ENCODE measurements at regions of chr1 and their contacts with region 1.

Region 1: GRCh38 chr1:119948342-119949214 is 52.3 kb upstream of the ADAM30 start:
- DNase-seq: peak; percentile 51
- H3K4me3 ChIP-seq: no peak overlapping the region; a peak in 1 of 4 replicates
- H3K27ac ChIP-seq: peak overlapping the region in 1 of 2 experiments; percentile 89; a peak in 2 of 4 replicates
- H3K4me1 ChIP-seq: peaks cover 0 to 20% of the 10 kb centered on the region in 2 experiments; a peak in 2 of 4 replicates
- H3K27me3 ChIP-seq: no peaks in the 10 kb centered on the region
- CTCF ChIP-seq: peak; percentile 92
- EP300 ChIP-seq: no peak
- RAD21 ChIP-seq: peak; percentile 96

Region 2: DNA sequence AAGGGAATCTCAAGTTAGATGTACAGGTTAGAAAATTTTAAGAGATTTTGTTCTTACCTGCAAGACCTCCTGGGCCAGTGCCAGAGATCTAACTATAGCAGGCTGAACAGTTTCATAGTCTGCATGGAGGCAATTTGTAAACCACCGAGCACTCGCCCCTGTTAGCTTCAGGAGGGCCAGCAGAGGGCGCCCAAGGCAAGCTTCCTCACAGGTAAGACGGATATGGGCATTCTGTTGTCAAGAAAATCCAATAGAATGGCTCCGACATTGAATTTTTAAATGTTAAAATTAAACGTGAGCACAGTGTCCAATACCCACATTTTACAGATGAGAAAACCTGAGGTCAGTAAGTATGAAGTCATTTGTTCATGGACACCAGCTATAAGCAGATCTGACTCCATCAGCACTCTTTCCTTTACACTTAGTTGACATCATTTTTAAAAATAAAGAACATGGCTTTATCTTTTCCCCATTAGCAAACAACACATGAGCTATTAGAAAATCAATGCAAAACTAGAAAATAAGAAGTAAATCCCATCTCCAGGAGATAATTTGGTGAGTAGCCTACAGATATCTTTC is 139.5 kb before region 1 on chr1:
- CTCF ChIA-PET with region 1: interaction called, 24 read pairs
- POLR2A ChIA-PET with region 1: no interaction called
- DNase-seq: peak; percentile 74
- H3K4me3 ChIP-seq: no peak overlapping the region; a peak in 1 of 4 replicates
- H3K27ac ChIP-seq: no peak overlapping the region
- H3K4me1 ChIP-seq: peaks cover 0 to 2% of the 10 kb centered on the region in 2 experiments; a peak in 1 of 4 replicates
- H3K27me3 ChIP-seq: peaks cover 28% of the 10 kb centered on the region
- CTCF ChIP-seq: peak; percentile 97
- EP300 ChIP-seq: no peak
- RAD21 ChIP-seq: peak; percentile 85

Region 3: GRCh38 chr1:119827010-119827409 is 121.6 kb before region 1 on chr1:
- CTCF ChIA-PET with region 1: no interaction called
- POLR2A ChIA-PET with region 1: no interaction called
- DNase-seq: peak; percentile 14
- H3K4me3 ChIP-seq: no peak overlapping the region
- H3K27ac ChIP-seq: no peak overlapping the region
- H3K4me1 ChIP-seq: no peaks in the 10 kb centered on the region
- H3K27me3 ChIP-seq: no peaks in the 10 kb centered on the region; the same call in 1 of the 2 replicates
- CTCF ChIP-seq: peak; percentile 52
- EP300 ChIP-seq: no peak
- RAD21 ChIP-seq: no peak

Region 4: DNA sequence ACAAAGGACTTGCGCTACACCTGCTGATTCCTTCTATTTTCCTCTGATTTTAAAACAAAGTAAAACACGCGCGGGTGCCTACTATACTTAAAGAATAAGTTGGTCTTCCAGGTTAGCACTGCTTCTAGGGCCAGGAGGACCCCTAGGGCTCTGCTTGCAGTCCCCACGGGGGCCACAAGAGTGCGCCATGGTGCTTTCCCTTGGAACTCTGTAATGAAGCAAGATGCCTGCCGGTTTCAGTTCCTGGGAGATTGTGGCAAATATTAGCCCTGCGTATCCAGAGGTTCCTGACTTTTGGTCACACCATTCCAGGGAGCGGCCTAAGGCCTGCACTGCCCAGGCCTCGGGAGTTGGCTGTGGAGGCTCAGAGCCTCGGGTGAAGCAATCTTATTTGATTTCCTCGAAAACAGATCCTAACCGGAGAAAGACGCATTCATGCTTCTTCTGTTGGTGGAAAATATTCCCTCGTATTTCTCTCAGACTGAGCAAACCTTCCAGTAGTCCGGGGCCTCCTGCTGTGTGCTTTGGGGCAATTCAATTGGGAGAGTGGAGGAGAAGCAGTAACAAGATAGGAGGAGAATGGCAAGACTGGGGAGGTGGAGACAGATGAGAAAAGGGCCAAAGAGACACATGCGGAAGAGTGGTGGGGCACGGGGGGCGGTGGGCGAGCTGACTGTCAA is 77.5 kb before region 1 on chr1:
- CTCF ChIA-PET with region 1: interaction called, 13 read pairs
- POLR2A ChIA-PET with region 1: no interaction called
- DNase-seq: peak; percentile 70
- H3K4me3 ChIP-seq: no peak overlapping the region
- H3K27ac ChIP-seq: no peak overlapping the region
- H3K4me1 ChIP-seq: peaks cover 10 to 27% of the 10 kb centered on the region in 2 experiments; a peak in 2 of 4 replicates
- H3K27me3 ChIP-seq: no peaks in the 10 kb centered on the region
- CTCF ChIP-seq: peak; percentile 98
- EP300 ChIP-seq: no peak
- RAD21 ChIP-seq: peak; percentile 95

Region 5: DNA sequence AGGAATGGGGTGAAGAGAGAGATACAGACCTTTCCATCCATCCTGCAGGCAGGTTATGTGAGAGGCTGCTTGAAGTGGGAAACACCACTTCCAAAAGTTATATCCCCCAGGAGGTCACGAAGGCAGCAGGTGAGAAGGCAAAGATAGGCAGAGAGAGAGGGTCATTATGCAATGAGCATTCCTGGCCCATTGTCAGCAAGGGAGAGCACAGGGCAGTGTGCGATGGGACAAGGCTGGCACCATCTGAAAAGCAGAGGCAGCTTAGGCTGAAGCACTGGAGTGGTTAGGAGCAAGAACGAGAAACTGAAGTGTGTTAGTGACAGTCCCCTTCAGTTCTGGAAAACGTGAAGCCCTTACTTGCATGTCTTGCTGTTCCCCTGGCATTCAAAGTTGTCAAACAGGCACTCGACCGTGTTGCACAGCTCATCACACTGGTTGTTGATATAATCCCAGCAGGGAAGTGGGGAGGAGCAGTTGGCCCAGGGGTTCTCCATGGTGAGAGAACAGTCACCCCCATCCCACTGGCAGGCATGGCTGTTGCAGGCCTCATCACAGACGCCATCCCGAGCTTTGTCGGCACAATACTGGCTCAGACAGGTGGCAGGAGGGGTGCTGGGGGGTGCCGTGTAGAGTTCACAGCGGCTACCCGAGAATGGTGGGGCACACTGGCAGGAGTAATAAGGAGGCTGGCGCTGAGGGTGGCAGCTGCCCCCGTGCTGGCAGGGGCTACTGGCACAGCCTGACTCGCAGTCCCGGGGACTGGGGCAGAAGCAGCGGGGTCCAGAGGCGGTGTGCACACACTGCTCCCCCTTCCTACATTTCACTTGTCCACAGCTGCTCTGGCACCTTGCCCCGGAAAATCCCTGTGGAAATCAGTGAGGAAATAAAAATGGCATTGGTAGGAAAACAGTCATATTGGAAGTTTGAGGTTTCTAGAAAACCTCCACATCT is 23.4 kb before region 1 on chr1:
- CTCF ChIA-PET with region 1: interaction called, 29 read pairs
- POLR2A ChIA-PET with region 1: no interaction called
- DNase-seq: no peak
- H3K4me3 ChIP-seq: no peak overlapping the region
- H3K27ac ChIP-seq: no peak overlapping the region
- H3K4me1 ChIP-seq: no peaks in the 10 kb centered on the region
- H3K27me3 ChIP-seq: no peaks in the 10 kb centered on the region
- CTCF ChIP-seq: no peak
- EP300 ChIP-seq: no peak
- RAD21 ChIP-seq: no peak

Region 6: GRCh38 chr1:119935373-119935772 is 13.2 kb before region 1 on chr1:
- CTCF ChIA-PET with region 1: interaction called, 17 read pairs
- POLR2A ChIA-PET with region 1: no interaction called
- DNase-seq: no peak
- H3K4me3 ChIP-seq: no peak overlapping the region
- H3K27ac ChIP-seq: no peak overlapping the region
- H3K4me1 ChIP-seq: no peaks in the 10 kb centered on the region
- H3K27me3 ChIP-seq: no peaks in the 10 kb centered on the region
- CTCF ChIP-seq: no peak
- EP300 ChIP-seq: no peak
- RAD21 ChIP-seq: no peak

Region 7: GRCh38 chr1:119968068-119968492 is 19.5 kb after region 1 on chr1:
- CTCF ChIA-PET with region 1: interaction called, 105 read pairs
- POLR2A ChIA-PET with region 1: no interaction called
- DNase-seq: peak; percentile 16
- H3K4me3 ChIP-seq: no peak overlapping the region
- H3K27ac ChIP-seq: no peak overlapping the region
- H3K4me1 ChIP-seq: peaks cover 5 to 19% of the 10 kb centered on the region in 2 experiments
- H3K27me3 ChIP-seq: no peaks in the 10 kb centered on the region
- CTCF ChIP-seq: peak; percentile 77
- EP300 ChIP-seq: no peak
- RAD21 ChIP-seq: peak; percentile 51

Region 8: DNA sequence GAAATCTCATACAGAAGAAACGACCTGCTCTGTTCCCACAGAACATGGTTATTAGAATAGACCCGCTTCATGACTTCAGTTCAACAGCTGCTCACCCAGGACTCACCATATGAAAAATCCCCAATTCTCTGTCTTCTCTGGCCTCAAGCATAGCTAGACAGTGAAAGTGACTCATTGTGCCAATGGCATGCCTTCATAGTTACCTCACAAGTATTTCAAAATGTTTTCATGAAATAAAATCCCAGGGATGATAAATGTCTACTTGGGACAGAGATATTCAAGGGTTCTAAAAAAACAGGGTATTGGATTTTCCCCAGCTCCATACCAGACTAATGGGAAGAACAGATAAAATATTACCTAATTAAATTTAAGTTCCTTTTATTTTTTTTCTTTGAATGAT is 38.5 kb after region 1 on chr1:
- CTCF ChIA-PET with region 1: interaction called, 13 read pairs
- POLR2A ChIA-PET with region 1: no interaction called
- DNase-seq: no peak
- H3K4me3 ChIP-seq: no peak overlapping the region
- H3K27ac ChIP-seq: peak overlapping the region; percentile 65 to 94; a peak in 3 of 4 replicates
- H3K4me1 ChIP-seq: peaks cover 15 to 40% of the 10 kb centered on the region in 2 experiments
- H3K27me3 ChIP-seq: no peaks in the 10 kb centered on the region
- CTCF ChIP-seq: no peak
- EP300 ChIP-seq: peak in 1 of 2 experiments; percentile 79; a peak in 2 of 4 replicates
- RAD21 ChIP-seq: no peak